ENCODE measurements at regions of chr3 and their contacts with region 1.

Region 1: GRCh38 chr3:152309535-152310307 is 41.0 kb downstream of the MBNL1 start:
- DNase-seq: no peak
- ATAC-seq: no peak
- H3K4me3 ChIP-seq: no peak overlapping the region
- H3K27ac ChIP-seq: no peak overlapping the region
- H3K4me1 ChIP-seq: peaks cover 0 to 5% of the 10 kb centered on the region in 2 experiments; a peak in 2 of 5 replicates
- H3K27me3 ChIP-seq: no peaks in the 10 kb centered on the region
- CTCF ChIP-seq: no peak
- EP300 ChIP-seq: no peak
- POLR2A ChIP-seq: no peak; the same call in 1 of the 2 replicates
- RAD21 ChIP-seq: no peak

Region 2: DNA sequence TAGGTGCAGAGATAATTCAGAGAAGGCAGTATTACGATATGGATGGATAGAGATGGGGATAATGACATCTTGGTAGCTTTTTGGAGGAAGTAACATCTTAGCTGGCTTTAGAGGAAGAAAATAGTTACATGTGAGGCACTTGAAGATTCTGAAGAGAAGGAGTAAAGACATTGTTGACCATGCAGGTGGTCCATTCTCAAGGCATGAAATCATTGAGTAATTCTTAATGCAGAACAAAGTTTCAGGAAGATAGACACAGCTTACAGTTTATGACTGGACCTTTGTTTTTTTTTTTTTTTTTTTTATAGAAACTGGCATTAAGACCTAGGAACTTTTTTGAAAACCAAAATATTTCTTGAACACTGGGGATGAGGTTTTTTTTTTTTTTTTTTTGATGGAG is 12.8 kb before region 1 on chr3:
- CTCF ChIA-PET with region 1: no interaction called
- POLR2A ChIA-PET with region 1: interaction called, 11 read pairs
- in situ Hi-C with region 1: no loop called
- intact Hi-C with region 1: no loop called
- DNase-seq: no peak
- ATAC-seq: no peak
- H3K4me3 ChIP-seq: no peak overlapping the region
- H3K27ac ChIP-seq: no peak overlapping the region
- H3K4me1 ChIP-seq: peaks cover 19 to 61% of the 10 kb centered on the region in 2 experiments
- H3K27me3 ChIP-seq: no peaks in the 10 kb centered on the region
- CTCF ChIP-seq: no peak
- EP300 ChIP-seq: no peak
- POLR2A ChIP-seq: no peak
- RAD21 ChIP-seq: no peak

Region 3: DNA sequence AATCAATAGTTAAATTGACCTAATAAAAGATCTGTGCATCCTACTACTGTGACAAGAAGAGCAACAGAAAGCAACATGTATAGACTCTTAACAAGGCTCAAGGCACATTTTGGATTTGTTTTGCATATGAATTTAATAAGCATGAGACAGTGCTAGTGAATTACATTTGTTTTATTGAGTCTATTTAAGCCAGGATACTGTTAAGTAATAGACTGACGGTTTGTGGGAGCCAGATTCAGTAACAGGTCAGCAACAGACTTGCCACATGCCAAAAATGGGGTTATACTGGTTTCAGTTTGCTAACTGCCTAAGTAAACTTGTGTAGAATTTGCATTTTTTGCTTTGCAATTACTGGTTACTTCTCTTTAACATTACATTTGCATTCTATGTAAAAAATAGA is 13.0 kb after region 1 on chr3:
- CTCF ChIA-PET with region 1: no interaction called
- POLR2A ChIA-PET with region 1: interaction called, 16 read pairs
- in situ Hi-C with region 1: no loop called
- intact Hi-C with region 1: no loop called
- DNase-seq: no peak
- ATAC-seq: no peak
- H3K4me3 ChIP-seq: no peak overlapping the region
- H3K27ac ChIP-seq: peak overlapping the region; percentile 20; the same call in 1 of the 3 replicates
- H3K4me1 ChIP-seq: peaks cover 12 to 47% of the 10 kb centered on the region in 2 experiments
- H3K27me3 ChIP-seq: no peaks in the 10 kb centered on the region
- CTCF ChIP-seq: no peak
- EP300 ChIP-seq: no peak
- POLR2A ChIP-seq: no peak
- RAD21 ChIP-seq: no peak

Region 4: DNA sequence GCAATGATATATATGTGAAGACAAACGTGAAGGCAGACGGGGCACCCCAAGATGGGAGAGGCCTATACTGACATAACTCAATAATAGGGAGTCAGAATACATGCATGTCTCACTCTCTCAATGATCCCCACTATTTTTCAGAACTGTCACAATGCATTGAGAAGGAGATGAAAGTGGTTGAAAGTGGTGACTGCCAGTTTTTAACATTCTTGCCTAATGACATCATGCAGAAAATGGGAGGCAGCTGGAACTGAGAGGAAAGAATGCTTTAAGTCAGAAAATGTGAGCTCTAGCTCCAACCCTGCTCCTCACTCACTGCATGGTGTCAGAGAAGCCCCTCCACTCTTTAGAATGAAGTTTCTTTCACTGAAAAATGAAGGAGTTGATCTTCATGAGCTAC is 469.9 kb after region 1 on chr3:
- CTCF ChIA-PET with region 1: no interaction called
- POLR2A ChIA-PET with region 1: no interaction called
- in situ Hi-C with region 1: no loop called
- intact Hi-C with region 1: no loop called
- DNase-seq: no peak
- ATAC-seq: no peak
- H3K4me3 ChIP-seq: no peak overlapping the region
- H3K27ac ChIP-seq: no peak overlapping the region
- H3K4me1 ChIP-seq: no peaks in the 10 kb centered on the region
- H3K27me3 ChIP-seq: no peaks in the 10 kb centered on the region
- CTCF ChIP-seq: no peak
- EP300 ChIP-seq: no peak
- POLR2A ChIP-seq: no peak
- RAD21 ChIP-seq: no peak